AG04449 (cell line): ENCODE measurements at regions of chr18 and their contacts with region 1.

Region 1: GRCh38 chr18:21629089-21629832 is 17.1 kb downstream of the SNRPD1 start:
- DNase-seq: no peak
- H3K4me3 ChIP-seq: no peak overlapping the region
- CTCF ChIP-seq: no peak

Region 2: DNA sequence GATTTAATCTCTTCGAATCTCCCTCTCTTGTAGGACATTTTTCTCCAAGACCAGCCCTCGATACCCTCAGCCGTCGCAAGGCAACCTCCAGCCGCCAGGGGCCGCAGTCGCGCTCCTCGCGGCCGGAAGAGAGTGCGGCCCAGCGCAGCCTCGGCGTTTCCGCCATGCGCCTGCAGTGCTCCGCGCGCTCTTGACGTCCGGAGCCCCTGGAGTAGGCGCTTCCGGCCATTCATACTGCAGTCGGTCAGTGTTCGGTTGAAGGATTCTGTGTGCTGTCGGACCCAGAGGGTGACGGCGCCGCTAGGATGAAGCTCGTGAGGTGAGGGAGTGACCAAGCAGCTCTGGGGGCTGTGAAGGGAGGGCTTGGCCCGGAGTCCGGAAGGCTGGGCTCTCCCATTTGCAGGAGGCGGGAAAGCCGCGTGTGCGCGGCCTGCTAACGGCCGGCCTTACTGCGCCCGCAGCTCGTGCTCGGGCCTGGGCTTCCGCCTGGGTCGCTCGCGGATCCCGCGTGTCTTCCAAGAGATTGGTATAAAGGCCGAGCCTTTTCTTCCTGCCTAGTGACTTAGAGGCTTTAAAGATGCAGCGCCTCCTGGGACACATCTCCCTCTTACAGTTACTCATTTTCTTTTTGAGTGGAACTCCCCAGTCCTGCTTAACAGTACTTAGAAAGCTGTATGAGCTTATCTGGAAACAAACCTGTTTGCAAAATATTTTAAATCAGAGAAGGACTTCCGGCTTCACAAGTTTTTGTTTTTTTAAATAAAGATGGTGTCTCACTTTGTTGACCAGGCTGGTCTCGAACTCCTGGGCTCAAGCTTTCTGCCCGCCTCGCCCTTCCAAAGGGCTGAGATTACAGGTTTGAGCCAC is 16.9 kb before region 1 on chr18 and contains the start of gene SNRPD1:
- CTCF ChIA-PET with region 1: interaction called, 33 read pairs
- POLR2A ChIA-PET with region 1: no interaction called
- DNase-seq: peak; percentile 60
- H3K4me3 ChIP-seq: peak within 1 kb of the TSS; percentile 94
- CTCF ChIP-seq: peak; percentile 98

Region 3: GRCh38 chr18:21747764-21748693 is 118.8 kb after region 1 on chr18:
- CTCF ChIA-PET with region 1: no interaction called
- POLR2A ChIA-PET with region 1: no interaction called
- DNase-seq: no peak
- H3K4me3 ChIP-seq: no peak overlapping the region
- CTCF ChIP-seq: no peak